ENCODE measurements at regions of chr12 and their contacts with region 1.

Region 1: DNA sequence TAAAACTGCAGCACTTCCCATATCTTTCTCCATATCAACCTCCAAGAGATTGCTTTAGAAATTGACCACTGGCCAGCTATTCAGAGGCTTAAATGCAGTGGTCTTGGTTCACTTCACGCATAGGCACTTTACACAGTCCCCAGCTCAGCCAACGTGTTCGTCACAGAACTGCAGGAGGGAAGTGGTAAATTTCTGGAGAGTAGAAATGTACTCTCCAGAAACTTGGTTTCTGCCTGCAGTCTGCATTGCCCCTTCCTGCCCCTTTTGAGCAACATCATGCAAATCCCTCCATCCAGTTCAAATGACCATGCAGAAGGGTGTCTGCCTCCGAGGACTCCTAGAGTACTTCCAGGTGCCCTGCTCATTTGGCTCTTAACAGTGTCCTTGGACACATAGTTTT is 42.7 kb upstream of the NEDD1 start:
- DNase-seq: no peak
- ATAC-seq: no peak
- H3K4me3 ChIP-seq: no peak overlapping the region
- H3K27ac ChIP-seq: no peak overlapping the region
- H3K4me1 ChIP-seq: no peaks in the 10 kb centered on the region
- H3K27me3 ChIP-seq: peaks cover 3% of the 10 kb centered on the region; the same call in 1 of the 2 replicates
- CTCF ChIP-seq: no peak

Region 2: DNA sequence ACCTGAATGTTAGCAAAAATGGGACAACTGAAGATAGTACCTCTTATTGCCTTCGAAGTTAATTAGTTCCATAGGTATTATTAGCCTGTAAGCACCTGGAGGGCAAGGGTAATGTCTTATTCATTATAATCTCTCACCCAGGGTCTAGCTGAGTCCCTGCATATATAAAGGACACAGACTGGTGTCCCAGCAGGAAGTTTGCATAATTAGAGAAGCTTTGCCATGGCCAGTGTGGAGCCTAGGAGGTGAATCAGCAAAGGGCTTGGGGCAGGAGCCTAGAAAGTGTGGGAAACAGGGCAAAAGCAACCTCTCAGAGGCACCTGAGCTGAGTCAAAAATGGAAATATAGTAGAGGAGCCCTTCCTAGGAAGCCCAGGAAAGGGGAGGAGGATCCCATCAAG is 163.1 kb after region 1 on chr12:
- CTCF ChIA-PET with region 1: no interaction called
- POLR2A ChIA-PET with region 1: interaction called, 10 read pairs
- in situ Hi-C with region 1: no loop called
- intact Hi-C with region 1: no loop called
- DNase-seq: no peak
- ATAC-seq: no peak
- H3K4me3 ChIP-seq: no peak overlapping the region
- H3K27ac ChIP-seq: no peak overlapping the region
- H3K4me1 ChIP-seq: no peaks in the 10 kb centered on the region
- H3K27me3 ChIP-seq: no peaks in the 10 kb centered on the region
- CTCF ChIP-seq: no peak

Region 3: GRCh38 chr12:97148941-97149559 is 284.7 kb after region 1 on chr12:
- CTCF ChIA-PET with region 1: no interaction called
- POLR2A ChIA-PET with region 1: no interaction called
- in situ Hi-C with region 1: no loop called
- intact Hi-C with region 1: no loop called
- DNase-seq: peak; percentile 51
- ATAC-seq: peak; percentile 97
- H3K4me3 ChIP-seq: no peak overlapping the region
- H3K27ac ChIP-seq: no peak overlapping the region
- H3K4me1 ChIP-seq: no peaks in the 10 kb centered on the region
- H3K27me3 ChIP-seq: no peaks in the 10 kb centered on the region
- CTCF ChIP-seq: peak; percentile 88